T-cell (primary cell): ENCODE measurements at regions of chr1 and their contacts with region 1.

Region 1: GRCh38 chr1:224922404-224923164 is 6.9 kb upstream of the DNAH14 start:
- DNase-seq: peak in 1 of 35 experiments; percentile 31
- ATAC-seq: peak in 1 of 4 experiments; percentile 33
- H3K4me3 ChIP-seq: no peak overlapping the region
- H3K4me3 Mint-ChIP-seq: no peak overlapping the region
- H3K27ac ChIP-seq: no peak overlapping the region
- H3K27ac Mint-ChIP-seq: no peak overlapping the region
- H3K4me1 ChIP-seq: no peaks in the 10 kb centered on the region
- H3K4me1 Mint-ChIP-seq: no peaks in the 10 kb centered on the region
- H3K27me3 ChIP-seq: peaks cover 0 to 5% of the 10 kb centered on the region in 2 experiments
- H3K27me3 Mint-ChIP-seq: peaks cover 8 to 11% of the 10 kb centered on the region in 2 donors

Region 2: DNA sequence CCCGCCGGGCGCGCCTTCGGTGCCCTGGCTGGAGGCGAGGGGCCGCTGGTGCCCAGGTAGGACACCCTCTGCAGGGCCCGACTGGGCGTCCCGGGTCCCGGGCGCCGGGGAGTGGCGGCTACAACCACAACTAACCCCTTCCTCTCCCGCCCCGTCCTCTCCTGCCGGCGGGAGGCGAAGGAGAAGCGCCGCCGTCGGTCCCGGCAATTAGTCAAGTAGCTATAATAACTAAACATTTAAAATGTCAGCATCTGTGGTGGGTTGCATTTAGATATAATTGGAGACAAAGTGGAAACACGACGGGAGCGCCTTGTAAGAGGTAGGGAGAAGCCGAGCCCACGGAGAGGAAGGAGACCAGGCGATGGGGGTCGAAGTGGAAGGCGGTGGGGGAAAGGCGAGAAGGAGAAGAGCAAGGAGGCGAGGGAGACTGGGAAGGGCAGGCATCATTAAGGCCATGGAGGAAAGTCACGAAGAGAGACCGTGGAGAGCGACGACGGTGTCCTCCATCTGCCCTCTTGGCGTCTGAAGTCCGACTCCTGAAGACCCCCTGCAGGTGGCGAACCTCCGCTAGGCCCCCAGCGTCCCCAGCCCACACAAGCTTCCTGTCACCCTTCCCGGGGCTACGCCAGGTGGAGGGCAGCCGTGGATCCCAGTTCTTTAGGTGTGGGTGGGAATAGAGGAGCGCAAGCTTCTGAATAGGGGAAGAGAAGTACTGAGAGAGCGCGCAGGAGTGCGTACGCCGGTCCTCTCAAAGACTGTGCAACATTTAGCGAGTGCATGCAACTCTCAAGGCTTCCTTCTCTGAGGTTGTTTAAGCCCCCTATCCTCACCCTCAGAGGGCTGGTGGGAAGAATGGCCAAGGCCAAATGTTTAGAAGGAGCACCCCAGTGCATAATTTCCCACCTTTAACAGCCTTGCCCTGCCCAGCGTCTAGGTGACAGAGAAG is 304.9 kb before region 1 on chr1:
- CTCF ChIA-PET with region 1: interaction called in 1 of 2 experiments, 11 read pairs
- POLR2A ChIA-PET with region 1: no interaction called
- DNase-seq: peak in 1 of 35 experiments; percentile 8
- ATAC-seq: peak in 1 of 4 experiments; percentile 32
- H3K4me3 ChIP-seq: peak overlapping the region in 1 of 2 donors; percentile 74
- H3K4me3 Mint-ChIP-seq: peak overlapping the region; percentile 69 to 84 (median 72)
- H3K27ac ChIP-seq: no peak overlapping the region
- H3K27ac Mint-ChIP-seq: peak overlapping the region in 1 of 2 donors; percentile 48
- H3K4me1 ChIP-seq: peaks cover 9 to 32% of the 10 kb centered on the region in 2 experiments
- H3K4me1 Mint-ChIP-seq: peaks cover 27 to 31% (median 28%) of the 10 kb centered on the region in 3 donors
- H3K27me3 ChIP-seq: peaks cover 20 to 34% of the 10 kb centered on the region in 2 experiments
- H3K27me3 Mint-ChIP-seq: peaks cover 51 to 53% of the 10 kb centered on the region in 2 donors

Region 3: DNA sequence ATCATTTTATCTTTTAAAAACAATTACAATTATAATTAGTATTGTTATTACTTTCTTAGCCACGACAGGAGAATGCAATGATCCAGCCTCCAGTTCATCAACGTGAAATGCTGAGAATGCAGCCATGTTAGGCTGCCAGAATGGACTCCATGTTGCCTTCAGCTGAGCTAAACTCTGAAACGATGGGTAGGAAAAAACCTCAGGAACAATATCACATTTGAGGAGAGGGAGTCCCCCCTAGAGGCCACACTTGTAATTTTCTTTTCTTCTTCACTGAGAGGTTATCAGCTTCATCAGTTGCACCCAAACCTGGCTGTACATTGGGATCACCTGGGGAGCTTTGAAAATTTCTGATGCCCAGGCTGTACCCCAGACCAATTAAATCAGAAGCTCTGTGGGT is 27.7 kb before region 1 on chr1:
- CTCF ChIA-PET with region 1: no interaction called
- POLR2A ChIA-PET with region 1: no interaction called
- DNase-seq: no peak
- ATAC-seq: no peak
- H3K4me3 ChIP-seq: no peak overlapping the region
- H3K4me3 Mint-ChIP-seq: no peak overlapping the region
- H3K27ac ChIP-seq: no peak overlapping the region
- H3K27ac Mint-ChIP-seq: no peak overlapping the region
- H3K4me1 ChIP-seq: no peaks in the 10 kb centered on the region
- H3K4me1 Mint-ChIP-seq: no peaks in the 10 kb centered on the region
- H3K27me3 ChIP-seq: peaks cover 0 to 4% of the 10 kb centered on the region in 2 experiments
- H3K27me3 Mint-ChIP-seq: peaks cover 0 to 6% of the 10 kb centered on the region in 2 donors

Region 4: GRCh38 chr1:224906340-224906739 is 16.2 kb before region 1 on chr1:
- CTCF ChIA-PET with region 1: no interaction called
- POLR2A ChIA-PET with region 1: no interaction called
- DNase-seq: no peak
- ATAC-seq: no peak
- H3K4me3 ChIP-seq: no peak overlapping the region
- H3K4me3 Mint-ChIP-seq: no peak overlapping the region
- H3K27ac ChIP-seq: no peak overlapping the region
- H3K27ac Mint-ChIP-seq: no peak overlapping the region
- H3K4me1 ChIP-seq: no peaks in the 10 kb centered on the region
- H3K4me1 Mint-ChIP-seq: no peaks in the 10 kb centered on the region
- H3K27me3 ChIP-seq: peaks cover 0 to 7% of the 10 kb centered on the region in 2 experiments
- H3K27me3 Mint-ChIP-seq: peaks cover 19 to 32% of the 10 kb centered on the region in 2 donors